ENCODE measurements at regions of chr1 and their contacts with region 1.

Region 1: DNA sequence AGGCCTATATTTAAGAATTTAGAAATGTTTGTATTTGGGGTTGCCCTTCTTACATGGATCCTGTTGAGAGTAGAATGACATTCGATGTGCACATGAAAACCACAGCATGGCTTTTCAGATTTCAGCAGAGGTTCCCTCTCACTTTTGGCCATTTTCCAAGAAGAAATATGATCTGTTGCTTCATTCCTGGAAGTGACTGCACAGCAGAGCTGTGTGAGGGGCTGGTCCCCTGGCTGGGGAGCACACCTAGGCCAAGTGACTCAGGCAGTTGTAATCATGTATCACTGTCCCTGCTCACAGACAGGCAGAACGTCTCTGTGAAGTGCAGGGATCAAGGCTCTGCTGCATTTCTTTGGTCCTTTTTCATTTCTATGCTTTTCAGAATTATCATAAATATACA is 32.3 kb downstream of the AGT start:
- DNase-seq: peak; percentile 97
- H3K4me3 Mint-ChIP-seq: no peak overlapping the region
- H3K27ac Mint-ChIP-seq: peak overlapping the region; percentile 4
- H3K4me1 Mint-ChIP-seq: peaks cover 24% of the 10 kb centered on the region
- H3K27me3 Mint-ChIP-seq: no peaks in the 10 kb centered on the region
- CTCF ChIP-seq: no peak

Region 2: GRCh38 chr1:230708631-230709580 is 27.3 kb after region 1 on chr1:
- CTCF ChIA-PET with region 1: no interaction called
- POLR2A ChIA-PET with region 1: no interaction called
- intact Hi-C with region 1: loop called (anchors 1 kb)
- DNase-seq: peak; percentile 95
- H3K4me3 Mint-ChIP-seq: no peak overlapping the region
- H3K27ac Mint-ChIP-seq: no peak overlapping the region
- H3K4me1 Mint-ChIP-seq: peaks cover 14% of the 10 kb centered on the region
- H3K27me3 Mint-ChIP-seq: no peaks in the 10 kb centered on the region
- CTCF ChIP-seq: no peak

Region 3: DNA sequence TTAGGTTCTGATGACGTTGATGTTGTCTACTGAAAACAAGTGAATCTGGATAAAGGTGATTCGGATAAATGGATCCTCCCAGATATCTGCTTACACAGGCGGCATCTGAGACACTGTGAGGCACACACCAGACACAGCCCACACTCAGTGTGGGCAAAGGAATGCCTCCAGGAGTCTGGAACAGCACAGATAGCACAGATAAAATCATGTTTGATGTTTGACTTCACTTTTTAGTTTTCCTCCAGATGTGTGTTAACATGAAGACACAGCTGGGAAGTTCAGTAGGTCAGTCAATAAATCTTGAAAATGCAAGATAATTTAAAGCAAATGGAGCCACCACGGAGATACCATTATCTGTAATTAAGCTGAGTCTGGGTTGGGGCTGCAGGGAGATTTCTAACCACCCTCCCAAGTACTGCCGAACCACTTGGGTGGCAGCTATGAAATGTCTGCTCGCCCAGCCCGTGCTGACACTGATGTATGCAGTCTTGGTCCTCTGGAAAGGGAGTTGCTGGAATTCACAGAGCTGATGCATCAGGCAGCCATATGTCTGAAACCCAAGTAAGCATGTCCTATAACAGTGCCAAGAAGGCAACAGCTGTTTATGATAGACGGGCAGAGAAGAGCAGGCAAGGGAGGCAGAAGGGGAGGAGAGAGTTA is 77.2 kb after region 1 on chr1:
- CTCF ChIA-PET with region 1: no interaction called
- POLR2A ChIA-PET with region 1: no interaction called
- intact Hi-C with region 1: no loop called
- DNase-seq: no peak
- H3K4me3 Mint-ChIP-seq: no peak overlapping the region
- H3K27ac Mint-ChIP-seq: no peak overlapping the region
- H3K4me1 Mint-ChIP-seq: no peaks in the 10 kb centered on the region
- H3K27me3 Mint-ChIP-seq: peaks cover 43% of the 10 kb centered on the region
- CTCF ChIP-seq: no peak

Region 4: DNA sequence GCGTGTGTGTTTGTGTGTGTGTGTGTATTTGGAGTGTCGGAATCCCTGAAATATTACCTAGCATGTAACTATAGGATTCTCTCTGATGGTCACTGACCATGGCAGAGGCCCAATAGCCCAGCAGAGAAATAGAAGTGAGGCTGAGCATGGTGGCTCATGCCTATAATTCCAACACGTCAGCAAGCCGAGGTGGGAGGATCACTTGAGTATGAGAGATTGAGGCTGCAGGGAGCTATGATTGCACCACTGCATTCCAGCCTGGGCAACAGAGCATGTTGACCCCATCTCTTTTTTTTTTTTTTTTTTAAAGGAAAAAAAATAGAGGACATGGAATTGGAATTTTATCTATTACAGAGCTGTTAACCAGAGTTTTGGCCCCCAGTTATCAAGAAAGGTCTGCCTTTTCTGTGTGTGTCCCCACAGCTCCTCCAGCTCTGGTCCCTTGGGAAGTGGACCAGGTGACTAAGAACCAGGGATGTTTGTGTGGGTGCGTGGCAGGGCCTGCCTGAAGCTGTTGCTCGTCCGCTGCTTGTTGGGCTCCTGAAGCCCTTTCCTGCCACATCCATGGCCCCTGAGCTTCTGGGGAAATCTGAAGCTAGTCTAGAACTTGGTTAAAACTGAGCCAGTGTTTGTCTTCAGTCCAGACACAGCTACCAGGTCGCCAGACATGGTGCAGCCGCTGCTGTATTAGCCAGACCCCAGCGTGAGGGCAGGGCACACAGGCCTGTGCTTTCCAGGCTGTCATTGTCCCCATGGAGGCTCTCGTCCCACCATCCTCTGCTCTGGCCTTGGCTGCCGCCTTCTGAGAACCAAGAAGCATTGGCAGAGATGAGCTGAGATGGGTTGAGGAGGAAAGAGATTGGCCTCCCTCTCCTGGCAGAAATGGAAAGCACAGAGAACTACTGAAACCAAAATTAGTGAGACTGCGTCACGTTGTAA is 91.1 kb after region 1 on chr1:
- CTCF ChIA-PET with region 1: interaction called, 12 read pairs
- POLR2A ChIA-PET with region 1: interaction called, 3 read pairs
- intact Hi-C with region 1: loop called (anchors 2 kb)
- DNase-seq: peak; percentile 72
- H3K4me3 Mint-ChIP-seq: no peak overlapping the region
- H3K27ac Mint-ChIP-seq: no peak overlapping the region
- H3K4me1 Mint-ChIP-seq: peaks cover 7% of the 10 kb centered on the region
- H3K27me3 Mint-ChIP-seq: no peaks in the 10 kb centered on the region
- CTCF ChIP-seq: peak; percentile 54

Measured in MCF 10A (cell line).